Testis (tissue), 5 donors: ENCODE measurements at regions of chr3 and their contacts with region 1.

Region 1: DNA sequence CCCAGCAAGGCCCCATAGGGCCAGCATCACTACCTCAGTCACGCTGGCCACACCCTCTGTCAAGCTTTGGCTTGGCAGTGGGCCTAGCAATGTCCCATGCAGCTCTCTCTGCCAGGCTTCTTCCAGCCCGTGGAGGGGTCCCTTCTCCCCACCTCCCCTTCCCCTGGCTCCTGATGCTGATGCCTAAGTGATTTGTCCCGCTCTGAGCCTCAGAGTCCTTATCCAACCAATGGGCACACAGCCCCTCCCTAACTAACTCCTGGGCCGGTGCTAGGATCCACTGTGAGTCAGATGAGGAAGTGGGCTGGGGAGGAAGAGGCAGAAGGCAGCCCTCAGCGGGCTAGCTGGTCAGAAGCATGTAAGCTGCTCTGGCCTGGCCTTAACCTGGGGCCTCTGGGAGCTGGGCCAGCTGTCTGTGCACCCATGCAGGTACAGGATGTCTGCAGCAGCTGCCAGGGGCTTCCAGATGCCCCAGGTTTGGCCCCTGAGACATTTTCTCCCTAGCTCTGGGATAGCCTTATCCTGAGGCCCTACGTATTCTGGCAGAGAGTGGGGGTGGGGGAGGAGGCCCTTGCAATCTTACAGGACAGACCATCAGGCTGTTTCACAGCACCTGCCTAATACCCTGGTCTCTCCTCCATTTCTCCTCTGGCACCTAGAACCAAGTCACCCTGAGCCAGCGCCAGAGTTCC is 740 bp upstream of the ZBTB47 start:
- DNase-seq: no peak
- H3K4me3 ChIP-seq: peak overlapping the region; percentile 72 to 80
- H3K27ac ChIP-seq: peak overlapping the region in 1 of 2 donors; percentile 94
- H3K4me1 ChIP-seq: peaks cover 25% of the 10 kb centered on the region
- H3K27me3 ChIP-seq: no peaks in the 10 kb centered on the region
- CTCF ChIP-seq: no peak
- POLR2A ChIP-seq: no peak

Region 2: DNA sequence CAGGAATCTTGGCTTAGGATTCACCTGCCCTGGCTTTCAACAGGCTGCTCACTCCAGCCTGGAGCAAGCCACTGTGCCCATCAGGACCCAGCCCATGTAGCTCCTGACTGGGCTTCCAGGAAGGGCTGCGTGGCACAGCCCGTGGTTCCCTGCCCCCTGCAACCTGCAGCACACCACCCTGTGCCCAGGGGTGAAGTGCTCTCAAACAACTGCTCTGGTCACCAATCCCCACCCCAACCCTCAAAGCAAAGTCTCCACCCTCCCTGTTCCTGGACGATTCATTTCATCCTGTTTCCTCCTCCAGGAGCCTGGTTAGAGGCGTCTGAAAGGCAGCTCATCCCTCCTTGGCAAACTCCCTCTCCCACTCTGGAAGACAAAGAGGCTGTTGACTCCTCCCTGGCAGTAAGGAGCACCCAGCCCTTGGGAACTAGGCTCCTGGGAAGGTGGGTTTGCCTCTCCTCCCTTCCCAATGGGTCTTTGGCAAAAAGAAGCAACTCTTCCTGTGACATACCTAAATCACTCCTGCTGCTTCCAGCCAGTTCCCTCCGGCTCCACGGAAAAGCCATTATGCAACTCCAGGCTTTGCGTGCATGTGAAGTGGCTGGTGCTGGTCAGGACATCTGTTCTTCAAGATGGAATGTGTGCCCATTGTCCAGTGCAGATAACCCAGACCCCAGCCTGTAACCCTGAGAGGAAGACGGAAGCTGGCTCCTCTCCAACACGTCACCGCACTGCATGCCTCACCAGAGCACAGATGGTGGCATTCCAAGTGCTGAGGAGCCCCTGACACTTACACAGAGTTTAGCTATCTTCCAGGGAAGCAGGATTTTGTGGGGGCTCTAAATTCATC is 179.4 kb before region 1 on chr3:
- intact Hi-C with region 1: no loop called
- DNase-seq: no peak
- H3K4me3 ChIP-seq: no peak overlapping the region
- H3K27ac ChIP-seq: no peak overlapping the region
- H3K4me1 ChIP-seq: peaks cover 4% of the 10 kb centered on the region
- H3K27me3 ChIP-seq: no peaks in the 10 kb centered on the region
- CTCF ChIP-seq: no peak
- POLR2A ChIP-seq: no peak

Region 3: DNA sequence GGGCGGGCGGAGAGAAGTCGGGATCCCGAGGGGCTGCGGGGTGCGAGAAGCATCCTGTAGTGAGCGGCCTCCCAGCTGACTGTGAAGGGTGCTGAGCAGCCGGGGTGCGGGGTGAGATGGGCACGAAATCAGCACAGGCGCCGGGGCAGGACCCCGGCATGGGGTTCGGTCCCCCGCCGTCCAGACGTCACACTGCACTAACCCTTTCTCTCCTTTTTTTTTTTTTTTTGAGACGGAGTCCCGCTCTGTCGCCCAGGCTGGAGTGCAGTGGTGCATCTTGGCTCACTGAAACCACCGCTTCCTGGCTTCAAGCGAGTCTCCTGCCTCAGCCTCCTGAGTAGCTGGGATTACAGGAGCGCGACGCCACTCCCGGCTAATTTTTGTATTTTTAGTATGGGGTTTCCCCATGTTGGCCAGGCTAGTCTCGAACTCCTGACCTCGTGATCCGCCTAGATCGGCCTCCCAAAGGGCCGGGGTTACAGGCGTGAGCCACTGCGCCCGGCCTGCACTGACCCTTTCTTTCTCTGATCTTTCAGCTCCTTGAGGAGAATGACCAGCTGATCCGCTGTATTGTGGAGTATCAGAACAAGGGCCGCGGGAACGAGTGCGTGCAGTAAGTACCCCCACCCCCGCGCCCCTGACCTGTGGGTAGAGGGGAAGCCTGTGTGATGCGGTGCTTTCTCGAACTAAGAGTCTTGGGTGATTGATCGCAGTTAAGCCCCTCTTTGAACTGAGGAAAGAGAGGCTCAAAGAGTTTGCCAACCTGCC is 61.6 kb before region 1 on chr3:
- intact Hi-C with region 1: loop called (anchors 10 kb)
- DNase-seq: no peak
- H3K4me3 ChIP-seq: peak overlapping the region; percentile 70 to 83
- H3K27ac ChIP-seq: peak overlapping the region; percentile 88 to 90
- H3K4me1 ChIP-seq: no peaks in the 10 kb centered on the region
- H3K27me3 ChIP-seq: no peaks in the 10 kb centered on the region
- CTCF ChIP-seq: no peak
- POLR2A ChIP-seq: no peak

Region 4: GRCh38 chr3:42804106-42804830 is 151.5 kb after region 1 on chr3 and contains the start of gene HIGD1A:
- intact Hi-C with region 1: no loop called
- DNase-seq: peak; percentile 98
- H3K4me3 ChIP-seq: peak within 1 kb of the TSS; percentile 86 to 90
- H3K27ac ChIP-seq: peak within 1 kb of the TSS; percentile 93 to 95
- H3K4me1 ChIP-seq: peaks cover 15% of the 10 kb centered on the region
- H3K27me3 ChIP-seq: no peaks in the 10 kb centered on the region
- CTCF ChIP-seq: peak in 1 of 3 experiments; percentile 14
- POLR2A ChIP-seq: peak; percentile 76
- total RNA-seq, gene HIGD1A: 95.6 to 110 TPM